ENCODE measurements at regions of chr7 and their contacts with region 1.

Region 1: DNA sequence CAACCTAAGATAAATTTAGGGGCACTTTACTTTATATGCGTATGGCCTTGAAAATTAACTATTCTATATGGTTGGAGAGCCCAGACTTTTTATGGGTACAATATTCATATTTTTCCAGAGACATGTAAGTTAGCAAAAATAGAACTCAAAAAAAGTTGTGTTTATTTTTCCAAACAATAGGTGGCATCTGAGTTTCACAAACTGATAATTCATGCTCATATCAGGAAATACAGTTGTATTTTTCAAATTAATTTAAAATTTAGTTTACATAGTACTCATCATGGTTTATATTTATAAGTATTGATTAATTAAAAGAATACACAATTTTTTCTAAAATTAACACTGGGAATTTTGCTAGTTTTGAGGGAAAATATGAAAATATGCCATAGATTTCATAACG is 34.6 kb downstream of the ANKRD7 start:
- DNase-seq: no peak
- H3K4me3 ChIP-seq: no peak overlapping the region
- H3K27ac ChIP-seq: no peak overlapping the region
- H3K4me1 ChIP-seq: no peaks in the 10 kb centered on the region
- H3K27me3 ChIP-seq: no peaks in the 10 kb centered on the region
- CTCF ChIP-seq: peak; percentile 52

Region 2: DNA sequence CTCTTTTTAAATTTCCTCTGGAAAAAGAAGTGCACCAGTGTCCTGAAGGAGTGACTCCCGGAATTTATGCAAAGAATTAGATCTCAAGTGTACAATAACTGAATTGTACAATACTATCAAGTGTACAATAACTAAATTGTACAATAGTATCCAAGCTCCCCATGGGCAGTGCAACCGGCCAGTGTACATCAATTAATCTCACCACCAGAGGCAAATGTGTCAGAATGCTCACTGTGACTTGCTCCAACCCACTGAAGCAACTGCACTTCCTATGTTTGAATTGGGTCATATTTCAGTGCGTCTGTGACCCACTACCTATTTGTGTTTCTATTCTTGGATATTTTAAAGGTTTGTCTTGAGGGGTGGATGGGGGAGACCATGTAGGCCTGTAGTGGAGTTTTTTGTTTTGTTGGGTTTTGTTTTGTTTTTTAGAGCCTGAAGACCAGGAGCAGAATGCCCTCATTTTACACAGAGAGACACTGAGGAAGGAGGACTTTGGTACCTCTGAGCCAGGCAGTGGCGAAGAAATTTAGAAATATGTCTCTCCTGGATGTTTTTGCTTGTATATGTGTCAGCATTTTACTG is 307.3 kb before region 1 on chr7:
- CTCF ChIA-PET with region 1: no interaction called
- POLR2A ChIA-PET with region 1: no interaction called
- intact Hi-C with region 1: no loop called
- DNase-seq: no peak
- H3K4me3 ChIP-seq: no peak overlapping the region
- H3K27ac ChIP-seq: no peak overlapping the region
- H3K4me1 ChIP-seq: no peaks in the 10 kb centered on the region
- H3K27me3 ChIP-seq: no peaks in the 10 kb centered on the region
- CTCF ChIP-seq: no peak

Region 3: GRCh38 chr7:118232837-118233236 is 26.3 kb before region 1 on chr7:
- CTCF ChIA-PET with region 1: no interaction called
- POLR2A ChIA-PET with region 1: no interaction called
- intact Hi-C with region 1: no loop called
- DNase-seq: peak; percentile 26
- H3K4me3 ChIP-seq: no peak overlapping the region
- H3K27ac ChIP-seq: no peak overlapping the region
- H3K4me1 ChIP-seq: peaks cover 8% of the 10 kb centered on the region
- H3K27me3 ChIP-seq: no peaks in the 10 kb centered on the region
- CTCF ChIP-seq: no peak

Region 4: DNA sequence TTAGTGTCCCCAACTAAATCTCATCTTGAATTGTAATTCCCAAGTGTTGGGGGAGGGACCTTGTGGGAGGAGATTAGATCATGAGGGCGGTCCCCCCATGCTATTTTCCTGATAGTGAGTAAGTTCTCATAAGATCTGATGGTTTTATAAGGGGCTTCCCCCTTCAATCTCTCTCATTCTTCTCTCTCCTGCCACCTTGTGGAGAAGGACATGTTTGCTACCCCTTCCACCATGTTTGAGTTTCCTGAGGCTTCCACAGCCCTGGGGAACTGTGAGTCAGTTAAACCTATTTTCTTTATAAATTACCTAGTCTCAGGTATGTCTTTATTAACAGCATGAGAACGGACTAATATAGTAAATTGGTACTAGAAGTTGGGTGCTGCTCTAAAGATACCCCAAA is 331.0 kb after region 1 on chr7:
- CTCF ChIA-PET with region 1: no interaction called
- POLR2A ChIA-PET with region 1: no interaction called
- intact Hi-C with region 1: loop called (anchors 5 kb)
- DNase-seq: peak; percentile 62
- H3K4me3 ChIP-seq: no peak overlapping the region
- H3K27ac ChIP-seq: no peak overlapping the region
- H3K4me1 ChIP-seq: no peaks in the 10 kb centered on the region
- H3K27me3 ChIP-seq: no peaks in the 10 kb centered on the region
- CTCF ChIP-seq: peak; percentile 58

Region 5: DNA sequence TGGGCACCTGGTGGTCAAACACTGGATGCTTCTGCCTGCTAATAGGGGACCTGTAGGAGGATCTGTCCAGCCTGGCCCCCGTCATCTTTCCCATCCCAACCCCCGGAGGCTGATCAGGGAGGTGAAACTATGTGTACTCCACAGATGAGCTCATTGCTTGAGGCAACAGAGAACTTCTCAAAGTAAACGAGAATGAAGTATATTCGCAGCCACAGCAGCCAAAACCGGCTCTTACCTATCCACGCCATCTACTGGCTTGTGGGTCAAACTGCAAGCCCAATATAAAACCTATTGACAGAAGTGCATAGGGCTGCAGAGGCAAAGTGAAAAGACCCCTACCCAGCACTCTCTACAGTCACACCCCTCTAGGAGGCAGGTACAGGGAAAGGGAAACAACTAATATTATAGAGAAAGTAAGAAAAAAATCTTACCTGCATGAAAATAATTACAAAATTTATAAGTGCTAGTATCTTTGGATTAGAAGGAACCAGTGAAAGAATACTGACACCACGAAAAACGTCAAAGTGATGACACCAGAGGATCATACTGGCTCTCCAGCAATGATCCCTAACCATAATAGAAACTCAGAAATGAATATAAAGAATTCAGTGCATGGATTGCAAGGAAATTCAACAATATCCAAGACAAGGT is 938.9 kb after region 1 on chr7:
- CTCF ChIA-PET with region 1: no interaction called
- POLR2A ChIA-PET with region 1: no interaction called
- intact Hi-C with region 1: loop called (anchors 5 kb)
- DNase-seq: peak; percentile 72
- H3K4me3 ChIP-seq: no peak overlapping the region
- H3K27ac ChIP-seq: no peak overlapping the region
- H3K4me1 ChIP-seq: no peaks in the 10 kb centered on the region
- H3K27me3 ChIP-seq: no peaks in the 10 kb centered on the region
- CTCF ChIP-seq: peak; percentile 80